CD8-positive, alpha-beta T cell (primary cell): ENCODE measurements at regions of chr12 and their contacts with region 1.

Region 1: GRCh38 chr12:98308141-98308540 is 207.2 kb upstream of the TMPO start:
- DNase-seq: no peak
- ATAC-seq: no peak
- H3K4me3 ChIP-seq: no peak overlapping the region
- H3K4me3 Mint-ChIP-seq: no peak overlapping the region
- H3K27ac ChIP-seq: no peak overlapping the region
- H3K27ac Mint-ChIP-seq: no peak overlapping the region
- H3K4me1 ChIP-seq: no peaks in the 10 kb centered on the region
- H3K4me1 Mint-ChIP-seq: no peaks in the 10 kb centered on the region
- H3K27me3 ChIP-seq: no peaks in the 10 kb centered on the region
- H3K27me3 Mint-ChIP-seq: peaks cover 30% of the 10 kb centered on the region
- CTCF ChIP-seq: no peak

Region 2: DNA sequence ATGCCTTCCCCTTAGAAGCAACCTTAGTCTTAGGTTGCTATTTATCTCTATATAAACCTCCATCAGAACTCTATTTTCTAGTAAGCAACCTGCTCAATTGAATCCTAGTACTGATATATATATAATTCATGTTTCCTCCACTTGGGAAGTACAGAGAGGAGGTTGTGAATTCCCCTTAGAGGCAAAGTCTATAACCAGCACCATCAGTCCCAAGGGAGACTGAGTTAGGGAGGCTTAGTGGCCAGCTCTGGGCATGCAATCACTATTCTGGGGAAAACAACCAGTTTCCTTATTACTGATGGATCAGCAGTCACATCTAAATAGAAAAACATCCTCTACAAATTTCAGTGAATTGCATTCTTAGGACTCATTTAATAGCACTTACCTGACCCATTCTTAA is 356.4 kb before region 1 on chr12:
- CTCF ChIA-PET with region 1: no interaction called
- POLR2A ChIA-PET with region 1: no interaction called
- intact Hi-C with region 1: no loop called
- DNase-seq: no peak
- ATAC-seq: no peak
- H3K4me3 ChIP-seq: no peak overlapping the region
- H3K4me3 Mint-ChIP-seq: no peak overlapping the region
- H3K27ac ChIP-seq: no peak overlapping the region
- H3K27ac Mint-ChIP-seq: no peak overlapping the region
- H3K4me1 ChIP-seq: no peaks in the 10 kb centered on the region
- H3K4me1 Mint-ChIP-seq: no peaks in the 10 kb centered on the region
- H3K27me3 ChIP-seq: no peaks in the 10 kb centered on the region
- H3K27me3 Mint-ChIP-seq: peaks cover 2% of the 10 kb centered on the region
- CTCF ChIP-seq: no peak

Region 3: GRCh38 chr12:98211909-98212695 is 96.0 kb before region 1 on chr12:
- CTCF ChIA-PET with region 1: no interaction called
- POLR2A ChIA-PET with region 1: no interaction called
- intact Hi-C with region 1: loop called in 1 of 2 experiments (anchors 10 kb)
- DNase-seq: no peak
- ATAC-seq: no peak
- H3K4me3 ChIP-seq: no peak overlapping the region
- H3K4me3 Mint-ChIP-seq: no peak overlapping the region
- H3K27ac ChIP-seq: no peak overlapping the region
- H3K27ac Mint-ChIP-seq: no peak overlapping the region
- H3K4me1 ChIP-seq: no peaks in the 10 kb centered on the region
- H3K4me1 Mint-ChIP-seq: no peaks in the 10 kb centered on the region
- H3K27me3 ChIP-seq: no peaks in the 10 kb centered on the region
- H3K27me3 Mint-ChIP-seq: peaks cover 5% of the 10 kb centered on the region
- CTCF ChIP-seq: no peak